Adrenal gland (tissue), 19 donors: ENCODE measurements at regions of chr9 and their contacts with region 1.

Region 1: DNA sequence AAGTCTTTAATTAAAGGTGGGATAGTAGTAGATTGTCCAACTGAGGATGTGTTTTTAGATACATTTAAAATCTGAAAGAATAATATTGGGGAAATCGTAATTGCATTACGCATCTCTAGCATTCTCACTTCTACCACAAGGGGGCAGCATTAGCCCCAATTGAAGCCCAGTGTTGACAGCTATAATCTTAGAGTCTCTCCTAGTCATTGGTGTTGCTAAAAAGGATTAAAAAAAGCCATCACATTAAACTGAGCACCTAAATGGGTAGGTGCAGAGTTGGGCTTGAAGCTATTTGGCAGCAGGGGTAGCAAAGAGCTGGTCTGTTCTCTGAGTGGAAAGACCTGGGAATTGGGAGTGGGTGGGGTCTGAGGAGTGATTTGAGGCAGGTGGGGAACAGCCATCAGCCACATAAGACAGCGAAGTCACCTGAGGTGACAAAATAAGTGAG is 177.2 kb downstream of the OSTF1 start:
- DNase-seq: peak; percentile 34 to 69 (median 48)
- H3K4me3 ChIP-seq: no peak overlapping the region
- H3K27ac ChIP-seq: no peak overlapping the region
- H3K4me1 ChIP-seq: no peaks in the 10 kb centered on the region
- H3K27me3 ChIP-seq: no peaks in the 10 kb centered on the region
- CTCF ChIP-seq: peak; percentile 65 to 96 (median 74)
- POLR2A ChIP-seq: no peak

Region 2: DNA sequence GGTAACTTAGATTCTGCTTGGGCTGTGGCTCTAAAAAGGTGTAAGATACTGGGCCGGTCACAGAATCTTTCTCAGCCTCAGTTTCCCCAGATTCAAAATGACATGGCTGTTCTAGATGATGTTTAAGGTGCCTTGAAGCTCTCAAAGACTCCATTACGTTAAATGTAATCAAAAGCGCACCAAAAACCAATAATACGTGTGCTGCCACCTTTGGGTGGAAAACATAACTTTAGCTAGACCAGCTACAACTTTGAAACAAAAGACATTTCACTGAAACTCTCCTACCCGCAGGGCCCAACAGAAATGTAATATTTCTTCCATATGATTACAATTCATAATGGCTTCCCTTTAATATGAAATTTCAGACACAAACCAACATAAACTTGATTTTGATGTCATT is 590.0 kb after region 1 on chr9:
- intact Hi-C with region 1: loop called (anchors 10 kb)
- DNase-seq: peak in 1 of 7 donors; percentile 9
- H3K4me3 ChIP-seq: no peak overlapping the region
- H3K27ac ChIP-seq: no peak overlapping the region
- H3K4me1 ChIP-seq: no peaks in the 10 kb centered on the region
- H3K27me3 ChIP-seq: no peaks in the 10 kb centered on the region
- CTCF ChIP-seq: peak in 5 of 6 experiments; percentile 8 to 47 (median 44)
- POLR2A ChIP-seq: no peak

Region 3: DNA sequence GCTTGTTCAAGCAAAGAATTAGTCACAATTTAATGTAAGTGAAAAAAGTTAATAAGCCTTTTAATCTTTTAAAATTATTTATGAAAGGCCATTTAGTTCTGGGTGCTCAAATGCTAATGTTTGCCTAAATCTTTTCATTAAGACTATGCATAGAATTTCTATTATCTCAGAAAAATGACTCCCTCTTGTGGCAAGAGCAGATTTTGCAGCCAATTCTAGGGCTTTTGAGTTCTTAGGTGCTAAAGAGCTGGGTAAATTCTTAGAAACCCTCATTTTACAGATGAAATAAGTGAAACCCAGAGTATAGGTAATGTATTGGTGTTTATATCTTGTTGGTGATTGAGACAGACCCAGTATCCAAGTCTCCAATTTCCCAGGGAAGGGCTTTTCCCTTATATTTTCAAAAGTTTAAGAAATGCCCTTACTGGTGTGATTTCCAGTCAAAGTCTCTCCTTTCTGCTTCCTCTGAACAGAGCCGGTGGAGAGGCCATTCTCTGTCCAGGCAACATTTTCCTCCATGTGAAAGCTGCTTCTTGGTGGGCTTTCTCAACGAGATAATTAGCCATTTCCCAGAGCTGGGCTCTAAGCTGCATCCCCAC is 600.8 kb after region 1 on chr9:
- intact Hi-C with region 1: loop called in 1 of 2 experiments (anchors 10 kb)
- DNase-seq: peak in 6 of 7 donors; percentile 28 to 74 (median 62)
- H3K4me3 ChIP-seq: no peak overlapping the region
- H3K27ac ChIP-seq: no peak overlapping the region
- H3K4me1 ChIP-seq: no peaks in the 10 kb centered on the region
- H3K27me3 ChIP-seq: no peaks in the 10 kb centered on the region
- CTCF ChIP-seq: peak; percentile 52 to 78 (median 66)
- POLR2A ChIP-seq: no peak